Activated naive CD4-positive, alpha-beta T cell treated with anti-CD3 and anti-CD28 coated beads for 36 hours (primary cell): ENCODE measurements at regions of chr9 and their contacts with region 1.

Region 1: GRCh38 chr9:132240753-132241493 is 79.1 kb downstream of the NTNG2 start:
- DNase-seq: peak; percentile 98
- H3K4me3 Mint-ChIP-seq: peak overlapping the region; percentile 92
- H3K27ac Mint-ChIP-seq: no peak overlapping the region
- H3K4me1 Mint-ChIP-seq: peaks cover 6% of the 10 kb centered on the region
- H3K27me3 Mint-ChIP-seq: peaks cover 2% of the 10 kb centered on the region

Region 2: DNA sequence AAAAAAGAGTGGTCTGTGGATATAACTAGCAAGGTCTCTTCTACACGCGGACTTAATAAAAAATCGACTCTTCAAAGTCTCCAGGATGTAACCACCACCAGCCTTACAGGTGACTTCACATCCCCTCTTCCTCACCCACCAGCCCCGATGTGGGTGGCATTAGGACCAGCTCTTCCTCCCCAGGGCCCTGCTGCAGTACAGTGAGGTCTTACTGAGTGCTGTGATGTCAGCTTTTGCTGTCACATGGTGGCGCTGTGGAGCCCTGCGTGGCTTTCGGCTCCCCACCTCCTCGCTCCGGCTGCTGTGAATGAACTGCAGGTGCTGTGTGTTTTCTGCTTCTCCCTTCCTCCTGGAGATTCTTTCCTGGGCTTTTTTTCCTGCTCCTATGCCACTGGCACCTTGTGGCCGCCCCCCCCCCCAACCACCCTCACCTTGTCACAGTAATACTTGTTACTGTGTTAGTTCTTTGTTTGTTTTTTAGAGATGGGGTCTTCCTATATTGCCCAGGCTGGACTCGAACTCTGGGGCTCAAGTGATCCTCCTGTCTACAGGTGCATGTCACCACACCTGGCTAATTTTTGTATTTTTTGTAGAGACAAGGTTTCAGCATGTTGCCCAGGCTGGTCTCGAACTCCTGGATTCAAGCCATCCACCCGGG is 485.3 kb before region 1 on chr9:
- CTCF ChIA-PET with region 1: interaction called, 11 read pairs
- intact Hi-C with region 1: loop called (anchors 2 kb)
- DNase-seq: peak; percentile 94
- H3K4me3 Mint-ChIP-seq: no peak overlapping the region
- H3K27ac Mint-ChIP-seq: no peak overlapping the region
- H3K4me1 Mint-ChIP-seq: peaks cover 13% of the 10 kb centered on the region
- H3K27me3 Mint-ChIP-seq: no peaks in the 10 kb centered on the region

Region 3: GRCh38 chr9:132079391-132080091 is 161.4 kb before region 1 on chr9 and contains the start of gene MED27:
- CTCF ChIA-PET with region 1: no interaction called
- intact Hi-C with region 1: loop called (anchors 1 kb)
- DNase-seq: peak; percentile 99
- H3K4me3 Mint-ChIP-seq: peak within 1 kb of the TSS; percentile 86
- H3K27ac Mint-ChIP-seq: peak within 1 kb of the TSS; percentile 74
- H3K4me1 Mint-ChIP-seq: peaks cover 45% of the 10 kb centered on the region
- H3K27me3 Mint-ChIP-seq: no peaks in the 10 kb centered on the region
- total RNA-seq, gene MED27: 27.7 to 31.3 TPM

Region 4: GRCh38 chr9:132210472-132211145 is 30.3 kb before region 1 on chr9:
- CTCF ChIA-PET with region 1: no interaction called
- intact Hi-C with region 1: no loop called
- DNase-seq: no peak
- H3K4me3 Mint-ChIP-seq: no peak overlapping the region
- H3K27ac Mint-ChIP-seq: no peak overlapping the region
- H3K4me1 Mint-ChIP-seq: no peaks in the 10 kb centered on the region
- H3K27me3 Mint-ChIP-seq: peaks cover 5% of the 10 kb centered on the region

Region 5: GRCh38 chr9:132260846-132261245 is 19.9 kb after region 1 on chr9:
- CTCF ChIA-PET with region 1: interaction called, 4 read pairs
- intact Hi-C with region 1: loop called (anchors 1 kb)
- DNase-seq: no peak
- H3K4me3 Mint-ChIP-seq: no peak overlapping the region
- H3K27ac Mint-ChIP-seq: no peak overlapping the region
- H3K4me1 Mint-ChIP-seq: peaks cover 7% of the 10 kb centered on the region
- H3K27me3 Mint-ChIP-seq: no peaks in the 10 kb centered on the region